Right cardiac atrium (tissue), 5 donors: ENCODE measurements at regions of chr1 and their contacts with region 1.

Region 1: GRCh38 chr1:156226116-156226538 is 13.3 kb downstream of the PMF1 start:
- DNase-seq: no peak
- ATAC-seq: no peak
- H3K4me3 ChIP-seq: no peak overlapping the region
- H3K27ac ChIP-seq: no peak overlapping the region
- H3K4me1 ChIP-seq: no peaks in the 10 kb centered on the region
- H3K27me3 ChIP-seq: no peaks in the 10 kb centered on the region

Region 2: DNA sequence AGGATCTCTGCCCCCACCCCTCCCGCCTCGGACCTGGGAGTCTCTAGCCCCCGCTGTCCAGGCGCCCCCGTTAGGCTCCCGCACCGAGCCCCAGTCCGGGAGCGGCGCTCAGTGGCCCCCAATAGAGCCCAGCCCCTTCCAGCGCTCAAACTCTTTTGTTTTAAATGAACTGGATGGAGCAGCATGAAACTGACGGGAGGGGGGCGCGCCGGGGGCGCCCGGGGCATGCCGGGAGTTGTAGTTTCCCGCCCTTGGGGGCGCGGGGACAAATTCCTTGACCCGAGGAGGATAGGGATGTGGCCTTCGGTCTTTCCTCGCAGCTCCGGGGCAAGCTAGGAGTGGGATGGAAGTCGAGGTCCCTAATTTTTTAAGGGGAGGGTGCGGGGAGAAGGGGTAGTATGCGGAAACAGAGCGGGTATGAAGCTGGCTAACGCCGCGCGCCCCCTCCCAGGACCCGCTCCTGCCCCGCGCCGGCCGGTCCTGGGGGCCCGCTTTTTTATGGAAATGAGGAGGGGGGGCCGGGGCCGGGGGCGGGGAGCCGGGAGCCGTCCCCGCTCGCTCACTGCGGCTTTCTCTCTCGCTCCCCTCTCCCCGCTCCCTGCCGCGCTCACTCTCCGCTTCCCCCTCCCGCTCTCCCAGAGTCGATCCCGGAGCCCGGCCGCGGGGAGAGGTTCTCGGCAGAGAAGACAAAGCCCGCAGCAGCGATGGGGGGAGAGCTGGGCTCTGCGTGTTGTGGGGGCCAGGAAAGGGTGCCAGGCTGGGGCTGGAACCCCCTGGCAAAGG is 143.6 kb before region 1 on chr1 and contains the start of gene MEX3A:
- intact Hi-C with region 1: loop called in 1 of 4 experiments (anchors 5 kb)
- DNase-seq: peak; percentile 75 to 90 (median 88)
- ATAC-seq: peak; percentile 86 to 88
- H3K4me3 ChIP-seq: peak within 1 kb of the TSS; percentile 91
- H3K27ac ChIP-seq: no peak within 1 kb of the TSS
- H3K4me1 ChIP-seq: no peaks in the 10 kb centered on the region
- H3K27me3 ChIP-seq: no peaks in the 10 kb centered on the region
- total RNA-seq, gene MEX3A: 0.17 to 0.33 (median 0.19) TPM

Region 3: GRCh38 chr1:156090822-156091188 is 135.3 kb before region 1 on chr1:
- intact Hi-C with region 1: loop called (anchors 2 to 10 kb)
- DNase-seq: peak; percentile 85 to 93 (median 93)
- ATAC-seq: peak; percentile 76 to 85
- H3K4me3 ChIP-seq: no peak overlapping the region
- H3K27ac ChIP-seq: no peak overlapping the region
- H3K4me1 ChIP-seq: no peaks in the 10 kb centered on the region
- H3K27me3 ChIP-seq: no peaks in the 10 kb centered on the region

Region 4: GRCh38 chr1:156096640-156097391 is 129.3 kb before region 1 on chr1:
- intact Hi-C with region 1: loop called in 1 of 4 experiments (anchors 10 kb)
- DNase-seq: peak; percentile 92 to 98 (median 97)
- ATAC-seq: peak; percentile 95
- H3K4me3 ChIP-seq: no peak overlapping the region
- H3K27ac ChIP-seq: peak overlapping the region; percentile 83
- H3K4me1 ChIP-seq: peaks cover 11% of the 10 kb centered on the region
- H3K27me3 ChIP-seq: no peaks in the 10 kb centered on the region

Region 5: GRCh38 chr1:156136970-156137483 is 89.1 kb before region 1 on chr1:
- intact Hi-C with region 1: loop called in 1 of 4 experiments (anchors 5 kb)
- DNase-seq: no peak
- ATAC-seq: no peak
- H3K4me3 ChIP-seq: no peak overlapping the region
- H3K27ac ChIP-seq: no peak overlapping the region
- H3K4me1 ChIP-seq: no peaks in the 10 kb centered on the region
- H3K27me3 ChIP-seq: no peaks in the 10 kb centered on the region

Region 6: GRCh38 chr1:156146020-156146768 is 79.9 kb before region 1 on chr1:
- intact Hi-C with region 1: loop called in 3 of 4 experiments (anchors 2 to 5 kb)
- DNase-seq: peak; percentile 74 to 88 (median 87)
- ATAC-seq: peak; percentile 48 to 54
- H3K4me3 ChIP-seq: no peak overlapping the region
- H3K27ac ChIP-seq: no peak overlapping the region
- H3K4me1 ChIP-seq: peaks cover 3% of the 10 kb centered on the region
- H3K27me3 ChIP-seq: no peaks in the 10 kb centered on the region

Region 7: GRCh38 chr1:156456622-156457465 is 230.7 kb after region 1 on chr1:
- intact Hi-C with region 1: no loop called
- DNase-seq: peak; percentile 99
- ATAC-seq: peak; percentile 96
- H3K4me3 ChIP-seq: peak overlapping the region; percentile 55
- H3K27ac ChIP-seq: peak overlapping the region; percentile 97
- H3K4me1 ChIP-seq: peaks cover 2% of the 10 kb centered on the region
- H3K27me3 ChIP-seq: no peaks in the 10 kb centered on the region